ENCODE measurements at regions of chr17 and their contacts with region 1.

Region 1: DNA sequence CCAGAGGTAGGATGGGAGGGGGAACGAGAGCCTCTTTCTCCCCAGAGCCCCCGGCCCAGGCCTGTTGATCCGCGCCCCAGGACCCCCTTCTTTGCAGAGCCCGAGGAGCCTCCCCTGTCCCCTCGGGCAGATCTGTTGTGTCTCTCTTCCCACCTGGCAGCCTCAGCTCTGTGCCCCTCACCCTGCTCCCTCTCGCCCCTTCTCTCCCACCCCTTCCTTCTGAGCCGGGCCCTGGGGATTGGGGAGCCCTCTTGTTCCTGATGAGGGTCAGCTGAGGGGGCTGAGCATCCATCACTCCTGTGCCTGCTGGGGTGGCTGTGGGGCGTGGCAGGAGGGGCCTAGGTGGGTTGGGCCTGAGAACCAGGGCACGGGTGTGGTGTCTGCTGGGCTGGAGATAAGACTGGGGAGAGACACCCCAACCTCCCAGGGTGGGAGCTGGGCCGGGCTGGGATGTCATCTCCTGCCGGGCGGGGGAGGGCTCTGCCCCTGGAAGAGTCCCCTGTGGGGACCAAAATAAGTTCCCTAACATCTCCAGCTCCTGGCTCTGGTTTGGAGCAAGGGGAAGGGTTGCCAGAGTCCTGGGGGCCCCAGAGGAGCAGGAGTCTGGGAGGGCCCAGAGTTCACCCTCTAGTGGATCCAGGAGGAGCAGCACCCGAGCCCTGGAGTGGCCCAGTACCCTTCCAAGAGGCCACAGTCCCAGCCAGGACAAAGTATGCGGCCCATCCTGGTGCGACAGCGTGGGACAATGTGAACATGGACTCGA is 65.4 kb downstream of the MRC2 start:
- DNase-seq: no peak
- H3K4me3 ChIP-seq: no peak overlapping the region
- H3K27ac ChIP-seq: peak overlapping the region in 1 of 2 donors; percentile 66
- H3K4me1 ChIP-seq: no peaks in the 10 kb centered on the region
- H3K27me3 ChIP-seq: no peaks in the 10 kb centered on the region
- CTCF ChIP-seq: no peak
- POLR2A ChIP-seq: no peak

Region 2: DNA sequence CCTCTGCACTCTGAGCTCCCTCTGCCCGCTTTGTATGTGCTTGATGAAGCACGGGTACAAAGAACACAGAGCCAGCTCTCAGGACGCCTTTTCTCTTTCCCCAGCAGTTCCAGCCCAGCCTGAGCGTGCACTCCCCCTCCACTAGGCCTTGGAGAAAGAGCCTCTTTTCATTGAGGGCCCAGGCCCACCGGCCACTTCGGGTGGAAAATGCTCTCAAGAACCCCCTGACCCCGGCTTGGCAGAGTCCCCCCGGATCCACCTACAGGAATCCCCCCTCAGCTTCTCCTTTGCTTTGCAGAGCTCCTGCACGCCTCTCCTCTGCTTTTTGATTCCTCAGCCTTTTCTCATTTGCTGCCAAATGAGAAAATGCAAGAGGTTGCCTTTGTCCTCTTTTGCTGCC is 35.2 kb before region 1 on chr17:
- intact Hi-C with region 1: loop called (anchors 1 kb)
- DNase-seq: no peak
- H3K4me3 ChIP-seq: no peak overlapping the region
- H3K27ac ChIP-seq: peak overlapping the region in 1 of 2 donors; percentile 54
- H3K4me1 ChIP-seq: peaks cover 11 to 13% of the 10 kb centered on the region in 2 donors
- H3K27me3 ChIP-seq: no peaks in the 10 kb centered on the region
- CTCF ChIP-seq: no peak
- POLR2A ChIP-seq: no peak

Region 3: GRCh38 chr17:63316100-63316499 is 623.2 kb after region 1 on chr17:
- intact Hi-C with region 1: no loop called
- DNase-seq: no peak
- H3K4me3 ChIP-seq: no peak overlapping the region
- H3K27ac ChIP-seq: no peak overlapping the region
- H3K4me1 ChIP-seq: no peaks in the 10 kb centered on the region
- H3K27me3 ChIP-seq: no peaks in the 10 kb centered on the region
- CTCF ChIP-seq: no peak
- POLR2A ChIP-seq: no peak

Region 4: GRCh38 chr17:63406689-63407330 is 713.9 kb after region 1 on chr17:
- intact Hi-C with region 1: loop called (anchors 5 kb)
- DNase-seq: peak in 1 of 2 donors; percentile 62
- H3K4me3 ChIP-seq: no peak overlapping the region
- H3K27ac ChIP-seq: no peak overlapping the region
- H3K4me1 ChIP-seq: no peaks in the 10 kb centered on the region
- H3K27me3 ChIP-seq: no peaks in the 10 kb centered on the region
- CTCF ChIP-seq: peak; percentile 63 to 86 (median 80)
- POLR2A ChIP-seq: no peak

Region 5: DNA sequence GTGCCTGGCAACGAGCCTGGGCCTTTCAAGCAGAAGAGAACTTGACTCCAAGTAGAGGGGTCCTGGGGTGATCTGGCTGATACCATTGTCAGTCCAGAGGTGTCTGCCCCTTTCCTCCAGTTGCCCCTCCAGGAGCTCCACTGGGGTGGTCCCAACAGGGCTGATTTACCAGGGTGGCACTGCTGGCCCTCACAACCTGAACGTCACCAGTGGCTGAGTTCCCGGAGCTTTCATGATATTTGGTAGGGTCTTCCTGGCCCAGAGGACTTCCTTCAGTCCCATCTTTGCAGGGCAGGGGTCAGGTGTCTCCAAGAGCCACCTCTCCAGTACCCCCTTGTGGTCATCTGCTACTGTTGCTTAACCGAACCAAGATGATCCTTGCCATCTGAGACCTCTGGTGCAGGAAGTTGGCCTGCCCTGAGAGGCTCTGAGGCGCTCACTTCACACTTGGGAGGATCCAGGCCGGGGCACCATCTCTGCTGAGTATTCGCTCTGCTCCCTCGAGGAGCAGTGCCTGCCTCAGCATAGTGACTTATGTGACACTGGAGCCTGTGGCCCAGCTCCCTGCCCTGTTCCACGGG is 1003.6 kb after region 1 on chr17:
- intact Hi-C with region 1: no loop called
- DNase-seq: no peak
- H3K4me3 ChIP-seq: no peak overlapping the region
- H3K27ac ChIP-seq: peak overlapping the region; percentile 52
- H3K4me1 ChIP-seq: peaks cover 0 to 8% of the 10 kb centered on the region in 2 donors
- H3K27me3 ChIP-seq: no peaks in the 10 kb centered on the region
- CTCF ChIP-seq: peak in 1 of 3 donors; percentile 25
- POLR2A ChIP-seq: no peak

Measured in breast epithelium (tissue), 4 donors.